ENCODE measurements at regions of chr3 and their contacts with region 1.

Region 1: GRCh38 chr3:160931474-160931873 is 173.7 kb downstream of the B3GALNT1 start:
- DNase-seq: no peak
- H3K4me3 ChIP-seq: no peak overlapping the region
- H3K27ac ChIP-seq: no peak overlapping the region
- H3K4me1 ChIP-seq: no peaks in the 10 kb centered on the region
- H3K27me3 ChIP-seq: no peaks in the 10 kb centered on the region
- CTCF ChIP-seq: no peak

Region 2: DNA sequence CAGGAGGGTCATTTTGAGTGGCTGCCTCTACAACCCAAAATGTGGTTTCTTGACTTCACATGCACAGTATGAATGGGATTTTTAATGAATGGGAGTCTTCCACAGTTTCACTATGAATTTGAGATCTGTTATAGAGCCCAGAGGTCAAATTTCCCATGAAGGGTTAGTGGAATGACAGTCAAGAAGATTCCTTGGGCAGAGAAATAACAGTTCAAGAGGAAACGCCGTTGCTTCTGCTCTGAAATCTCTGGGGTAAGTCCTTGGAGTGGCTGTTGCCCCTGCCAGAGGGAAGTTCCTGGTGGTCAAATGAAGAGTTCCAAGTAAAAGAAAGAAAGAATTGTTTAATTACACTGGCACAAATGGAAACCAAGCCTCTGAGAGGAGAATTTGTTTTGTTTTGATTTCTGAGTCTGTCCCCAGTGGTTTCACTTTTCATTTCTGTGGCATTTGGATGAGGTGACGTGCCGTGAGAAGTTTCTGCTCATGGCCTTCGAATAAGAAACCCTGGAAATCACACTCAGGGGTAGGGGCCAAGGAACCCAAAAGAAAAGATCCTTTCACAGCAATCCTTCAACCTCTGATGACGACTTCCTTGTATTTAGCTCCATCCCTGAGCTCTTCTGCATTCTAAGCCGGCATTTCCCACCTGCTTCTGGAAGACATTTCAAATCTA is 1020.3 kb before region 1 on chr3:
- intact Hi-C with region 1: no loop called
- DNase-seq: no peak
- H3K4me3 ChIP-seq: peak overlapping the region; percentile 44 to 45
- H3K27ac ChIP-seq: peak overlapping the region; percentile 54 to 65
- H3K4me1 ChIP-seq: peaks cover 0 to 18% (median 0%) of the 10 kb centered on the region in 4 donors
- H3K27me3 ChIP-seq: no peaks in the 10 kb centered on the region
- CTCF ChIP-seq: no peak

Region 3: DNA sequence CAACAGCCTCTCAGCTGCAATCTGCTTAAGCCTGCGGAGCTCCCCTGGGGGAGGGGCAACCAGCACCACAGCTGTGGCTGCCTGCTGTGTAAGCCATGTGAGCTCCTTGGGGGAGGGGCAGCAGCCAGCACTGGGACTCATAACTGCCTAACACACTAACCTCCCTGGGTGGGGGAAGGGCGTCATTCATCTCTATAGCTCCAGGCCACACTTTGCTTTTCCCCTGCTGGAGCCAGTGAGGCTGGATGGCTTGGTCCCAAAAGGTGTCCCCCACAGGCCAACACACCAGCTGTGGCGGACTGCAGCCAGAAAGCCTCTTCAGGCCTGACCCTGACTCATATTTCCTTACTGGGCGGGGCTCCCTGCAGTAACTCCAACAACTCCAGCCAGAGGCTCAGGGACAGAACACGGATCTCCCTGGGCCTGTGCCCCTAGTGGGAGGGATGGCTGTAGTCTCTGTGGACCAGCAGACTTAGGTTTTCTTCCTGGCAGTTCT is 45.6 kb before region 1 on chr3:
- intact Hi-C with region 1: no loop called
- DNase-seq: no peak
- H3K4me3 ChIP-seq: no peak overlapping the region
- H3K27ac ChIP-seq: no peak overlapping the region
- H3K4me1 ChIP-seq: no peaks in the 10 kb centered on the region
- H3K27me3 ChIP-seq: no peaks in the 10 kb centered on the region
- CTCF ChIP-seq: no peak

Region 4: DNA sequence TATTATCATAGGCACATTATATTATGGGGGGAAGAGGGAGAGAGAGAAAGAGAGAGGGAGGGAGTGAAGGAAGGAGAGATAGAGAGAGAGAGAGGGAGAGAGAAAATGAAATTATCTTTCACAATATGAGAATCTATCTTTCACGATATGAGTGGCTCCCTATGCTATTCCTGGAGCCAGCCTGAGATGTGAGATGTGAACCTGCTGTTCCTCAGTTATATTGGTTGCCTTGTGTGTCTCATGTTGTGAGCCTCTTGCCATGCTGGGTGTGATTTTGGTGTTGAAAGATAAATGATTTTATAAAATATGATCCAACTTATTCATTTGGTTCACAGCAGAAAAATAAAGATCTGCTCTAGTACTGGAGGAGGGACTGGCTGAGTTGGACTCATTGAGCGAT is 26.8 kb before region 1 on chr3:
- intact Hi-C with region 1: loop called (anchors 1 kb)
- DNase-seq: no peak
- H3K4me3 ChIP-seq: no peak overlapping the region
- H3K27ac ChIP-seq: no peak overlapping the region
- H3K4me1 ChIP-seq: no peaks in the 10 kb centered on the region
- H3K27me3 ChIP-seq: no peaks in the 10 kb centered on the region
- CTCF ChIP-seq: no peak

Region 5: GRCh38 chr3:161028616-161029015 is 97.1 kb after region 1 on chr3:
- intact Hi-C with region 1: no loop called
- DNase-seq: no peak
- H3K4me3 ChIP-seq: no peak overlapping the region
- H3K27ac ChIP-seq: no peak overlapping the region
- H3K4me1 ChIP-seq: no peaks in the 10 kb centered on the region
- H3K27me3 ChIP-seq: no peaks in the 10 kb centered on the region
- CTCF ChIP-seq: no peak

Measured in tibial artery (tissue), 4 donors.